Heart left ventricle (tissue), 16 donors: ENCODE measurements at regions of chr20 and their contacts with region 1.

Region 1: GRCh38 chr20:50120897-50121693 is 8.1 kb upstream of the UBE2V1 start:
- DNase-seq: peak in 4 of 5 donors; percentile 54 to 74 (median 61)
- ATAC-seq: peak; percentile 69 to 83 (median 80)
- H3K4me3 ChIP-seq: no peak overlapping the region
- H3K27ac ChIP-seq: peak overlapping the region in 3 of 12 donors; percentile 6 to 27 (median 22)
- H3K4me1 ChIP-seq: peaks cover 0 to 14% (median 6%) of the 10 kb centered on the region in 12 donors
- H3K27me3 ChIP-seq: no peaks in the 10 kb centered on the region
- CTCF ChIP-seq: peak; percentile 65 to 91 (median 76)
- POLR2A ChIP-seq: no peak

Region 2: DNA sequence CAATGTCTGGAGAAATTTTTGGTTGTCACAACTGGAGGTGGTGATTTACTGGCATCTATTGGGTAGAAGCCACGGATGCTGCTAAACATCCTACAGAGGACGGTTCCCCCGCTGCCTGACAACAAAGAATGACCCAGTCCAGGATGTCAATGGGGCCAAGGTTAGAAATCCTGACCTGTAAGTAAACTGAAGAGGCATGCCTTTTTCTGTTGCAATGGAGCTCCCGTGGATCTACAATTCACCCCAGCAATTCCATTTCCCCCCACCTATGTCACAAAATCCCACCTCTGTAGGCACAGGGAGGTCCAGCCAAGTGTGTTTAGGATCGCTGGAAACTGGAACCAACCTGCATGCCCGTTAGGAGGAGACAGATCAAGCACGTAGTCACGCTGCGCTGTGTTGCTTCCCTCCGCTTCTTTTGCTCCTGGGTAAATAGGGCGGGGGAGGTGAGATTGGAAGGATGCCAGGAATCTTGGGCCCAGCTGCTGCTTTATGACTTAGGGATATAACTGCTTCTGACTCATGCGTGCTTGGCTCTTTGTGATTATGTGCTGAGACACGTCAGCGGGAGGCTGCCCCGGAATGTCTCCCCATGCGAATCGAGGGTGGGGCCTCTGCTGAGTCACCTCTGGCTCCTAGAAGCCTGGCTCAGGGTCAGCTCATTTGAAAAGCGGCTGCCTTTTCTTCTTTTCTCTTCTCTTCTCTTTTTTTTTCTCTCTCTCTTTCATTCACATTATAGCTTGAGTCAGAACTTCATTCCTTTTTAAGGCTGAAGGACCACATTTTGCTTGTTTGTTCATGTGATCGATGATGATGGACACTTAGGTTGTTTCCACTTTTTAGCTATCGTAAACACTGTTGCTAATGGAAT is 44.8 kb after region 1 on chr20:
- intact Hi-C with region 1: loop called (anchors 1 to 5 kb)
- DNase-seq: peak; percentile 95 to 99 (median 97)
- ATAC-seq: peak; percentile 97 to 99 (median 98)
- H3K4me3 ChIP-seq: peak overlapping the region in 11 of 12 donors; percentile 0 to 45 (median 34)
- H3K27ac ChIP-seq: peak overlapping the region; percentile 74 to 92 (median 89)
- H3K4me1 ChIP-seq: peaks cover 0 to 39% (median 17%) of the 10 kb centered on the region in 12 donors
- H3K27me3 ChIP-seq: no peaks in the 10 kb centered on the region
- CTCF ChIP-seq: peak in 1 of 12 donors; percentile 18
- POLR2A ChIP-seq: peak in 1 of 2 donors; percentile 50

Region 3: GRCh38 chr20:50172347-50173013 is 51.4 kb after region 1 on chr20:
- intact Hi-C with region 1: loop called (anchors 1 to 5 kb)
- DNase-seq: peak; percentile 92 to 96 (median 95)
- ATAC-seq: peak; percentile 90 to 97 (median 95)
- H3K4me3 ChIP-seq: peak overlapping the region; percentile 50 to 75 (median 62)
- H3K27ac ChIP-seq: peak overlapping the region; percentile 75 to 95 (median 92)
- H3K4me1 ChIP-seq: peaks cover 0 to 31% (median 16%) of the 10 kb centered on the region in 12 donors
- H3K27me3 ChIP-seq: no peaks in the 10 kb centered on the region
- CTCF ChIP-seq: no peak
- POLR2A ChIP-seq: peak in 1 of 2 donors; percentile 82

Region 4: GRCh38 chr20:50635667-50636503 is 514.8 kb after region 1 on chr20:
- intact Hi-C with region 1: no loop called
- DNase-seq: peak; percentile 72 to 86 (median 79)
- ATAC-seq: peak; percentile 71 to 85 (median 74)
- H3K4me3 ChIP-seq: peak overlapping the region in 9 of 12 donors; percentile 10 to 44 (median 20)
- H3K27ac ChIP-seq: peak overlapping the region; percentile 15 to 77 (median 57)
- H3K4me1 ChIP-seq: peaks cover 0 to 30% (median 16%) of the 10 kb centered on the region in 12 donors
- H3K27me3 ChIP-seq: no peaks in the 10 kb centered on the region
- CTCF ChIP-seq: peak; percentile 76 to 94 (median 85)
- POLR2A ChIP-seq: peak in 1 of 2 donors; percentile 9